ENCODE measurements at regions of chr17 and their contacts with region 1.

Region 1: GRCh38 chr17:59311130-59311920 is 20.1 kb upstream of the YPEL2 start:
- DNase-seq: peak; percentile 42 to 62
- H3K4me3 ChIP-seq: no peak overlapping the region
- H3K27ac ChIP-seq: no peak overlapping the region
- H3K4me1 ChIP-seq: no peaks in the 10 kb centered on the region
- H3K27me3 ChIP-seq: no peaks in the 10 kb centered on the region
- CTCF ChIP-seq: peak; percentile 94

Region 2: DNA sequence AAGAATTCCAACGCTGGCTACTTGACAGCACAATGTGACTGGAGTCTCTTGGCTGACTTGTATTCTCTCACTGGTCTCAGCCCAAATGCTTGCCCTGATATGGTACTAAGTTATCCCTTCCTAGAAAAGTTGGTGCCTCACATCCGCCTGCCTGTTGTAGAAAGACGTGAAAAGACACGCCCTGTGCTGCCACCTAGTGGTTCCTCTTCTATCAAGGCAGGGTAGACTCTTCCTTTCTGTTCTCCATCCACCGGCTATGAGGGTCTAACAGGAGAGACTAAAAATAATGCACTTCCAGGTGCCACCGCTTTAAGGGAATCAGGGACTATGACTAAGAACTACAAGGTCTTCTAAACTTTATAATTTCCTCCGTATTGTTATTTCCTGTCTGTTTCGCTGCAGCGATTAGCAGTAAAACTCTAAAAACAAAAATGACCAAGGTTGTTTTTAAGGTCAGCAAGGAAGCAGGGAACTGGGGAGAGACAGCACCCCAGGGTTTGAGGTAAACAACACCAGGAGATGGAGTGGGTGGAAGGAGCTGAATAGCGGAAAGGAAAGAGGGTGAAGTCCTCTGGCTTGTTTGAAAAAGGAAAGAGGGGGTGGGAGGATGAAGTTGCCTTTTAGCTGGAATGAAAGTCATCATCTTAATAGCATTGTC is 129.6 kb after region 1 on chr17:
- CTCF ChIA-PET with region 1: interaction called, 4 read pairs
- POLR2A ChIA-PET with region 1: no interaction called
- intact Hi-C with region 1: loop called (anchors 1 kb)
- DNase-seq: peak; percentile 68 to 77
- H3K4me3 ChIP-seq: no peak overlapping the region
- H3K27ac ChIP-seq: no peak overlapping the region
- H3K4me1 ChIP-seq: peaks cover 13% of the 10 kb centered on the region
- H3K27me3 ChIP-seq: no peaks in the 10 kb centered on the region
- CTCF ChIP-seq: peak; percentile 92

Region 3: DNA sequence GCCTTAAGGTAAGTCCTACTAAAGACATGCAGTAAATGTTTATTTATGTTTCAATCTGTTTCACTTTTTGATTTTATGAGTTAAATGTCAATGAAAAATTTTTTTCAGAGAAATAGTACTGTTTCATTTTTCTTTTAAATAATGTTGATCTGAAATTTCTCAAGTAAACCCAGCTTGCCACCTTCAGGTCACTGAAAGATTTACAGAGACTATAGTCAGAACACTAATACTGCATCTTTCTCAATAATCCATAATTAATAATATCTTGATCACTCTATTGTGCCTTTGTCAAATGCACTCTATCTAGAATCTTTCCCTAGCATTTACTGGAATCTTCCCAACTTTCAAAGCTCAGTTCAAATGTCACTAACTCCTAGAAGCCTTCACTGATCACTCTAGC is 247.7 kb after region 1 on chr17:
- CTCF ChIA-PET with region 1: interaction called, 3 read pairs
- POLR2A ChIA-PET with region 1: no interaction called
- intact Hi-C with region 1: loop called (anchors 1 kb)
- DNase-seq: no peak
- H3K4me3 ChIP-seq: no peak overlapping the region
- H3K27ac ChIP-seq: no peak overlapping the region
- H3K4me1 ChIP-seq: no peaks in the 10 kb centered on the region
- H3K27me3 ChIP-seq: no peaks in the 10 kb centered on the region
- CTCF ChIP-seq: peak; percentile 61

Region 4: DNA sequence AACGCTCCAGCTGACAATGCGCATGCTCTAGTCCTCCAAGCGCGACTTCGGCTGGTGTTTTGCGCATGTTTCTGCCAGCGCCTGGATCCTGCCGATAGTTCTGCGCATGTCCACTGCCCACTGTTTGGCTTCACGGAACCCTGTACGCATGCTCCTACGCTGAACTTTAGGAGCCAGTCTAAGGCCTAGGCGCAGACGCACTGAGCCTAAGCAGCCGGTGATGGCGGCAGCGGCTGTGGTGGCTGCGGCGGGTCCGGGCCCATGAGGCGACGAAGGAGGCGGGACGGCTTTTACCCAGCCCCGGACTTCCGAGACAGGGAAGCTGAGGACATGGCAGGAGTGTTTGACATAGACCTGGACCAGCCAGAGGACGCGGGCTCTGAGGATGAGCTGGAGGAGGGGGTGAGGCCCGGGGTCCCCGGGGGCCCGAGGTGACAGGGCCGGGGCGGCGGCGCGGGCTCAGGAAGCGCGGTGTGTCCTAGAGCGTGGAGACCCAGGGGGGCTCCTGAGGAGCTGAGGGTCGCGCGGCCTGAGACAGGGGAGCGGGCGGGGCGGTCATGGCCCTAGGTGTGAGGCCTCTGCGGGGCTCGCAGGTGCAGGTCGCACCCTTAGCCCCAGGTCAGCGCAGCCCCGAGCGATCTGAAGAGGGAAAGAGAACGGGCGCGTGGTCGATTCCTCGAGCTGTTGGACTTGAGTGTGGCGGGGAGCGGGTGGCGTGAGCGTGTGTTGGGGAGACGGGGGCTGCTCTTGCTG is 581.8 kb after region 1 on chr17 and contains the starts of genes RPS6KB1 and TUBD1:
- CTCF ChIA-PET with region 1: no interaction called
- POLR2A ChIA-PET with region 1: interaction called, 17 read pairs
- intact Hi-C with region 1: no loop called
- DNase-seq: peak; percentile 96 to 97
- H3K4me3 ChIP-seq: peak within 1 kb of the TSS; percentile 75
- H3K27ac ChIP-seq: peak within 1 kb of the TSS; percentile 40
- H3K4me1 ChIP-seq: peaks cover 24% of the 10 kb centered on the region
- H3K27me3 ChIP-seq: no peaks in the 10 kb centered on the region
- CTCF ChIP-seq: peak; percentile 19; the same call in 1 of the 2 replicates
- total RNA-seq, gene RPS6KB1: 31.4 and 41.8 TPM in 2 replicates
- total RNA-seq, gene TUBD1: 11.8 and 13.5 TPM in 2 replicates